Caco-2 (cell line): ENCODE measurements at regions of chr2 and their contacts with region 1.

Region 1: DNA sequence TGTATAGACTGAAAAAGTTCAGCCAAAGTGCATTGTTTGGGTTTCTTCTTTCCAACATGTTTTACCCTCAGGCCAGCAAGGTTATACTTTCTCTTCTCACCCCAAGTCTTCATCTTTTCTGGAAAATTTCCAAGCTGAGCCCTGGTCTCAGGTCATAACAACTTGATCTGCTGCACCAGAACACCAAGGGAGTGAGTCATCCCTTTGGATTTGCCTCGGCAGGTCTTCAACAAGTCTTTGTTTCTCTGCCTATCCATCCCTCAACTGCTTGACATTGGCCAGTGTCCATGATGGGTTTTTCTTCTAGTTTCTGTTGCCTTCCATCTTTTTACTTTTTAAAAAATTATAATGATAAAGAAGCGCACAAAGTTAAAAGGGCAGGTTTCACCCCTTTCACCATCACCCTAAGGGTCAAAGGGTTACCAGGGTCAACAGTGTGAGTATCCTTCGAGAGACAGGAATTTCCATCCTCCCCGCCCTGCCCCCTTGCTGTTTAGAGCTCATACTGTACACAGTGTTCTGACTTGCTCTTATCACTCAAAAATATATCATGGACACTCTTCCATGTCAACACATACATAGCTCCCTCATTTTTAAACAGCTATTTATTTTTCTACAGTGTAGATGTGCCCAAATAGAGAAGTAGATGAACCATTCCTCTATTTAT is 5.7 kb upstream of the SPATS2L start:
- DNase-seq: no peak
- H3K4me3 ChIP-seq: no peak overlapping the region
- H3K4me3 Mint-ChIP-seq: no peak overlapping the region
- H3K27ac Mint-ChIP-seq: peak overlapping the region; percentile 39
- H3K4me1 ChIP-seq: peaks cover 48% of the 10 kb centered on the region
- H3K4me1 Mint-ChIP-seq: peaks cover 46% of the 10 kb centered on the region
- H3K27me3 ChIP-seq: no peaks in the 10 kb centered on the region
- H3K27me3 Mint-ChIP-seq: no peaks in the 10 kb centered on the region
- CTCF ChIP-seq: no peak

Region 2: GRCh38 chr2:199985625-199986207 is 315.1 kb before region 1 on chr2:
- CTCF ChIA-PET with region 1: interaction called, 5 read pairs
- POLR2A ChIA-PET with region 1: no interaction called
- intact Hi-C with region 1: loop called (anchors 1 kb)
- DNase-seq: peak; percentile 82 to 83
- H3K4me3 ChIP-seq: no peak overlapping the region
- H3K4me3 Mint-ChIP-seq: no peak overlapping the region
- H3K27ac Mint-ChIP-seq: no peak overlapping the region
- H3K4me1 ChIP-seq: peaks cover 27% of the 10 kb centered on the region
- H3K4me1 Mint-ChIP-seq: peaks cover 6% of the 10 kb centered on the region
- H3K27me3 ChIP-seq: no peaks in the 10 kb centered on the region
- H3K27me3 Mint-ChIP-seq: no peaks in the 10 kb centered on the region
- CTCF ChIP-seq: peak; percentile 64 to 75

Region 3: DNA sequence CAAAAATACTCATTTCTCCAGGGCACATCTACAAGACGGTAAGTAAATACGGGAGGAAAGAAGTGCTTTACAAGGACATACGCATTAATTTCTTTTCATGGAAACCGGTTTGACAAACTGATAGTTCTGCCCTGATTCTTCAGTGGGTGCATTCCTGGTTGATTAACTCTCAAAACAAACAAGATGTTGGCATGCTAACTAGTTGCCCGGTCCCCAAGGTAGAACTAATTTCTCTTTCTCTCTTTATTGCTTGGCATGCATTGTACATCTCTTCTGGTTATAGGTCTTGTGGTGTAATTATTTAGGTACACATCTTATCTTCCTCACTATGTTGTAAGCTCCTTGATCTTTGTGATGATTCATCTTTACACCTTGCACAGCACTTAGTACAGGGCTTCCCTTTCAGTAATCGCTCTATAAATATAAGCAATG is 41.2 kb before region 1 on chr2:
- CTCF ChIA-PET with region 1: no interaction called
- POLR2A ChIA-PET with region 1: interaction called, 6 read pairs
- intact Hi-C with region 1: loop called (anchors 1 kb)
- DNase-seq: peak in 1 of 2 experiments; percentile 67
- H3K4me3 ChIP-seq: no peak overlapping the region
- H3K4me3 Mint-ChIP-seq: peak overlapping the region; percentile 49
- H3K27ac Mint-ChIP-seq: peak overlapping the region; percentile 17
- H3K4me1 ChIP-seq: peaks cover 39% of the 10 kb centered on the region
- H3K4me1 Mint-ChIP-seq: peaks cover 24% of the 10 kb centered on the region
- H3K27me3 ChIP-seq: no peaks in the 10 kb centered on the region
- H3K27me3 Mint-ChIP-seq: no peaks in the 10 kb centered on the region
- CTCF ChIP-seq: no peak

Region 4: GRCh38 chr2:200405599-200406298 is 105.0 kb after region 1 on chr2:
- CTCF ChIA-PET with region 1: interaction called, 3 read pairs
- POLR2A ChIA-PET with region 1: interaction called, 6 read pairs
- intact Hi-C with region 1: loop called (anchors 1 kb)
- DNase-seq: peak; percentile 82 to 87
- H3K4me3 ChIP-seq: no peak overlapping the region
- H3K4me3 Mint-ChIP-seq: peak overlapping the region; percentile 55
- H3K27ac Mint-ChIP-seq: peak overlapping the region; percentile 60
- H3K4me1 ChIP-seq: peaks cover 66% of the 10 kb centered on the region
- H3K4me1 Mint-ChIP-seq: peaks cover 70% of the 10 kb centered on the region
- H3K27me3 ChIP-seq: no peaks in the 10 kb centered on the region
- H3K27me3 Mint-ChIP-seq: no peaks in the 10 kb centered on the region
- CTCF ChIP-seq: no peak